Activated CD8-positive, alpha-beta T cell treated with anti-CD3 and anti-CD28 coated beads, Interleukin-2, amount 10 ng/mL, durations not matched to agents 7 days and 5 days (primary cell): ENCODE measurements at regions of chr1 and their contacts with region 1.

Region 1: GRCh38 chr1:116139592-116140134 is 28.5 kb downstream of the MAB21L3 start:
- DNase-seq: peak; percentile 12
- ATAC-seq: no peak
- H3K4me3 Mint-ChIP-seq: no peak overlapping the region
- H3K27ac Mint-ChIP-seq: no peak overlapping the region
- H3K4me1 Mint-ChIP-seq: peaks cover 14% of the 10 kb centered on the region
- H3K27me3 Mint-ChIP-seq: peaks cover 7% of the 10 kb centered on the region

Region 2: DNA sequence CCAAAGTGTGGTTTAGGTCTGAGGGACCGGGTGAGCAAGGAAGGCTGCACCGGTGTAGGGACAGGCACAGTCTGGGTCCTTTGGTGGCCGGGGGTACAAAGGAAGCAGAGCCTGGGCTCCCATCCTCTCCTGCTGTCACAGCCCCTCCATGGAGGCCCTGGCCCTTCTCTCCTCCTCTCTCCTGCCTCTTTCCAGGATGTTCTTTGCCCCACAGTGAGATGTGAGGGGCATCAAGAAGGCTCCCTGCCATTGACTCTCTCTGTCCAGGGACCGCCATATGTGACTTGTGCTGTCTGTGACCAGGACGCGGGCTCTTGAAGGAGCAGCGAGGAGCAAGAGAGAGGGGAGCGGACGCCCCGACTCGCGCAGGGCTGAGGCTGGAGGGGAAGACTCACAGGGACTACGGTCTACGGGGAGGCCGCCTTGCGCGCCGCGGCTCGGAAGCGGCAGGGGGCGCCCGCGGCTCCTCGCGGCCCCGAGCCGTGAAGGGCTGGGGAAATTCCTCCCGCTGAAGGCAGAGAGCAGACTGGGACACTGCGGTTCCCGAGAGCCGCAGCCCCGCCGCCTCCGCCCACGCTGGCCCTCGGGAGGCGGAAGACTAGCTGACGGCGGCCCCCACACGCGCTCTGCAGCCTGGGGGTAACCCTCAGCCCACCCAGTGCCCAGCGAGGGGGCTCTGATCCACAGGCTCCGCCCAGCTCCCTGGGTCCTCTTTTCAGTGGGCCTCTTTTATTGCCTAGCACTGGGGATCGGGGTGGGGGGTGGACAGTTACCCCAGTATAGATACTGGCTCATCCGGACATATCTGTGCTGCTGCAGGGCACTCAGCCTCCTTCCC is 12.3 kb after region 1 on chr1:
- CTCF ChIA-PET with region 1: interaction called, 75 read pairs
- POLR2A ChIA-PET with region 1: interaction called, 4 read pairs
- DNase-seq: peak; percentile 77
- ATAC-seq: peak; percentile 97
- H3K4me3 Mint-ChIP-seq: peak overlapping the region; percentile 60
- H3K27ac Mint-ChIP-seq: peak overlapping the region; percentile 70
- H3K4me1 Mint-ChIP-seq: peaks cover 19% of the 10 kb centered on the region
- H3K27me3 Mint-ChIP-seq: peaks cover 19% of the 10 kb centered on the region

Region 3: DNA sequence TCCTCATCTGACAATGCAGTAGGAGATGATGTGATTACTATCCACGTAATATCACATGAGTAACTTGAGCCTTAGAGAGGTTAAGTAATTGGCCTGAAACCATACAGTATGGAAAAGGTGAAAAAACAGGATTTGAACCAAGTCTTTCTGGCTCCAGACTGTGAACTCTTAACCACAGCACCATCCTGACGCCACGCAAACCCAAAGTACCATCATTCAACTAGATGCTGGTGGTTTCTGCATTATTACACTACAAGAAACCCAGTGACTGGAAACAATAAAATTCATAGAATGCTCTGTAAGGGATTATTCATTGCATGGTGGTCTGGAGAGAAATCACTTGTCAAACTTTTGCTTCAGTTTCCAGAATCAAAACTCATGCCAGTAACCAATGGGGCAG is 62.2 kb after region 1 on chr1:
- CTCF ChIA-PET with region 1: no interaction called
- POLR2A ChIA-PET with region 1: no interaction called
- DNase-seq: no peak
- ATAC-seq: no peak
- H3K4me3 Mint-ChIP-seq: no peak overlapping the region
- H3K27ac Mint-ChIP-seq: no peak overlapping the region
- H3K4me1 Mint-ChIP-seq: no peaks in the 10 kb centered on the region
- H3K27me3 Mint-ChIP-seq: peaks cover 11% of the 10 kb centered on the region

Region 4: GRCh38 chr1:116360429-116361173 is 220.9 kb after region 1 on chr1:
- CTCF ChIA-PET with region 1: interaction called, 12 read pairs
- POLR2A ChIA-PET with region 1: no interaction called
- DNase-seq: no peak
- ATAC-seq: no peak
- H3K4me3 Mint-ChIP-seq: no peak overlapping the region
- H3K27ac Mint-ChIP-seq: no peak overlapping the region
- H3K4me1 Mint-ChIP-seq: peaks cover 4% of the 10 kb centered on the region
- H3K27me3 Mint-ChIP-seq: peaks cover 12% of the 10 kb centered on the region

Region 5: DNA sequence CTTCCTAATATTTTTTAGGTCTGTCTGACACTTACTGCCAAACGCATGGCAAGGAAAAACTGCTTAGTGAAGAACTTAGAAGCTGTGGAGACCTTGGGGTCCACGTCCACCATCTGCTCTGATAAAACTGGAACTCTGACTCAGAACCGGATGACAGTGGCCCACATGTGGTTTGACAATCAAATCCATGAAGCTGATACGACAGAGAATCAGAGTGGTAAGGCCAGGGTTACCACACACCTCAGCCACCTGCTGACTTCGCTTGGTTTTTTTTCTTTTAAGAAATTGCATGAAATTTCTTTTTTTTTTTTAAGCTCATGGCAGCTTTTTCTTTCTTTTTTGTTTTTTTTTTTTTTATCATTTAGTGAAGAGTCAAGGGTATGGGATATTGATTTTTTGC is 250.5 kb after region 1 on chr1:
- CTCF ChIA-PET with region 1: interaction called, 13 read pairs
- POLR2A ChIA-PET with region 1: no interaction called
- DNase-seq: peak; percentile 64
- ATAC-seq: peak; percentile 85
- H3K4me3 Mint-ChIP-seq: no peak overlapping the region
- H3K27ac Mint-ChIP-seq: peak overlapping the region; percentile 50
- H3K4me1 Mint-ChIP-seq: peaks cover 54% of the 10 kb centered on the region
- H3K27me3 Mint-ChIP-seq: no peaks in the 10 kb centered on the region

Region 6: DNA sequence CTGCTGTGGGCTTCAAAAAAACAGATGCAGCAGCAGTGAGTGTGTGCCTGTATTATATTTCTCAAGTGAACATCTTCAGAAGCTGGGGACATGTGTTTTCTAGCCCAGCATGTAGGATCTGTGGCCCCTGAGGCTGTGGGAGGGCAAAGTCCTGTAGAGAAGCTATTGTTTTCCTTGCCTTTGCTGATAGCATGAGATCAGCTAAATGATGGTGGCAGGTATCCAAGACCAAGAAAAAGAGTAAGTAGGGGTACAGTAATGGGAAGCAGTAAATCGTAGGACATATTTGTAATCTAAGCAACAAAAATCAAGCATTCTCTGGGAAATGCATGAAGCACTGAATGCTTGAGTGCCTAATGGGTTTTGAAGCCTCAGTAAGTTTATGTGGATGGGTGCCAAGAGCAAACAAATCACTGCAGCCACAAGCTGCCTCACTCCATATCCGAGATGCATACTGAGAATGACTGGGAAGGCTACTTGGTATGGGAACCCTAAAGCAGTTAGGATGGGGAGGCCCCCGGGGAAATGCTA is 332.8 kb after region 1 on chr1:
- CTCF ChIA-PET with region 1: interaction called, 12 read pairs
- POLR2A ChIA-PET with region 1: no interaction called
- DNase-seq: no peak
- ATAC-seq: no peak
- H3K4me3 Mint-ChIP-seq: no peak overlapping the region
- H3K27ac Mint-ChIP-seq: no peak overlapping the region
- H3K4me1 Mint-ChIP-seq: no peaks in the 10 kb centered on the region
- H3K27me3 Mint-ChIP-seq: peaks cover 2% of the 10 kb centered on the region

Region 7: GRCh38 chr1:116498789-116499628 is 359.3 kb after region 1 on chr1:
- CTCF ChIA-PET with region 1: interaction called, 429 read pairs
- POLR2A ChIA-PET with region 1: no interaction called
- DNase-seq: peak; percentile 69
- ATAC-seq: peak; percentile 71
- H3K4me3 Mint-ChIP-seq: no peak overlapping the region
- H3K27ac Mint-ChIP-seq: no peak overlapping the region
- H3K4me1 Mint-ChIP-seq: peaks cover 52% of the 10 kb centered on the region
- H3K27me3 Mint-ChIP-seq: no peaks in the 10 kb centered on the region

Region 8: GRCh38 chr1:116574581-116575291 is 435.1 kb after region 1 on chr1:
- CTCF ChIA-PET with region 1: interaction called, 15 read pairs
- POLR2A ChIA-PET with region 1: no interaction called
- DNase-seq: peak; percentile 75
- ATAC-seq: no peak
- H3K4me3 Mint-ChIP-seq: no peak overlapping the region
- H3K27ac Mint-ChIP-seq: no peak overlapping the region
- H3K4me1 Mint-ChIP-seq: peaks cover 31% of the 10 kb centered on the region
- H3K27me3 Mint-ChIP-seq: peaks cover 5% of the 10 kb centered on the region